GM12878 (cell line): ENCODE measurements at regions of chr17 and their contacts with region 1.

Region 1: GRCh38 chr17:9971991-9972599 is 67.0 kb upstream of the RCVRN start:
- DNase-seq: no peak
- ATAC-seq: no peak
- H3K4me3 ChIP-seq: no peak overlapping the region
- H3K27ac ChIP-seq: no peak overlapping the region
- H3K4me1 ChIP-seq: peaks cover 7% of the 10 kb centered on the region; the same call in 1 of the 2 replicates
- H3K27me3 ChIP-seq: no peaks in the 10 kb centered on the region
- CTCF ChIP-seq: no peak
- EP300 ChIP-seq: no peak
- POLR2A ChIP-seq: no peak
- RAD21 ChIP-seq: no peak

Region 2: GRCh38 chr17:9948928-9949327 is 23.2 kb before region 1 on chr17:
- CTCF ChIA-PET with region 1: no interaction called
- POLR2A ChIA-PET with region 1: no interaction called
- RAD21 ChIA-PET with region 1: no interaction called
- SMC1A ChIA-PET with region 1: no interaction called
- in situ Hi-C with region 1: no loop called
- intact Hi-C with region 1: no loop called
- DNase-seq: no peak
- ATAC-seq: no peak
- H3K4me3 ChIP-seq: no peak overlapping the region
- H3K27ac ChIP-seq: no peak overlapping the region
- H3K4me1 ChIP-seq: no peaks in the 10 kb centered on the region
- H3K27me3 ChIP-seq: no peaks in the 10 kb centered on the region
- CTCF ChIP-seq: no peak
- EP300 ChIP-seq: no peak
- POLR2A ChIP-seq: no peak
- RAD21 ChIP-seq: no peak

Region 3: GRCh38 chr17:10033959-10034358 is 61.9 kb after region 1 on chr17:
- CTCF ChIA-PET with region 1: no interaction called
- POLR2A ChIA-PET with region 1: no interaction called
- RAD21 ChIA-PET with region 1: no interaction called
- SMC1A ChIA-PET with region 1: no interaction called
- in situ Hi-C with region 1: no loop called
- intact Hi-C with region 1: no loop called
- DNase-seq: no peak
- ATAC-seq: no peak
- H3K4me3 ChIP-seq: peak overlapping the region; percentile 11; the same call in 1 of the 2 replicates
- H3K27ac ChIP-seq: peak overlapping the region; percentile 43
- H3K4me1 ChIP-seq: peaks cover 14% of the 10 kb centered on the region
- H3K27me3 ChIP-seq: no peaks in the 10 kb centered on the region
- CTCF ChIP-seq: no peak
- EP300 ChIP-seq: no peak
- POLR2A ChIP-seq: no peak
- RAD21 ChIP-seq: no peak

Region 4: DNA sequence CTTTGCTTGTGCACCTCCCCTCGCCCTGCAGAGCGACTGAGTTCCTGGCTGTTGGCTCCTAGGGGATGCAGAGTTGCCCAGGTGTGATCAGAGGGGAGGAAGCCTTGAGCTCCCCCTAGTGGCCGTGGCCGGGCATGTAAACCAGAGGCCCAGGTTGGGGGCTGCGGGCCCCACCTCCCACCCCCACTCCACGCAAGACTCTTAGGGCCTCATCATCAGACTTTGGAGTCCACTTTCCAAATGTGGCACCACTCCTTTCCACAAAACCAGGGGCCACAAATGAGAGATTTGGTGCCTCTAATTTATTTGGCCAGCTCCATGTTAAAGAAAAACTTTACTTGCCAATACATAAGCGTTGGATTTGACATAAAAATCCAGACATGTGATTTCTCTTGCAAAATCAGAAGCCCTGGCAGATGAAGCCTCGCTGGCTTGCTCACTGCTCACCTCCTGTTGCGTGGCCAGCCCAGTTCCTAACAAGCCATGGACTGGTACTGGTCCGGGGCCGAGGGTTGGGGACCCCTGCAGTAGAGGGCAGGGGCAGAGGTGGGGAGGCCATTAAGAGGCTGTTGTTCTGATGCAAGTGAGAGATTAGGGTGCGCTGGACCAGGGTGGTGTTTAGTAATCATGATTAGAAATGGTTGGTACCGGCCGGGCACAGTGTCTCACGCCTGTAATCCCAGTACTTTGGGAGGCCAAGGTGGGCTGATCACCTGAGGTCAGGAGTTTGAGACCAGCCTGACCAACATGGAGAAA is 255.0 kb after region 1 on chr17:
- CTCF ChIA-PET with region 1: interaction called, 35 read pairs
- POLR2A ChIA-PET with region 1: no interaction called
- RAD21 ChIA-PET with region 1: interaction called, 6 read pairs
- SMC1A ChIA-PET with region 1: interaction called, 16 read pairs
- in situ Hi-C with region 1: loop called (anchors 5 kb)
- intact Hi-C with region 1: no loop called
- DNase-seq: no peak
- ATAC-seq: peak; percentile 97
- H3K4me3 ChIP-seq: no peak overlapping the region
- H3K27ac ChIP-seq: no peak overlapping the region
- H3K4me1 ChIP-seq: no peaks in the 10 kb centered on the region; the same call in 1 of the 2 replicates
- H3K27me3 ChIP-seq: no peaks in the 10 kb centered on the region
- CTCF ChIP-seq: peak; percentile 85 to 98 (median 85)
- EP300 ChIP-seq: no peak
- POLR2A ChIP-seq: no peak
- RAD21 ChIP-seq: peak; percentile 70

Region 5: GRCh38 chr17:10327640-10328039 is 355.5 kb after region 1 on chr17:
- CTCF ChIA-PET with region 1: interaction called, 3 read pairs
- POLR2A ChIA-PET with region 1: no interaction called
- RAD21 ChIA-PET with region 1: no interaction called
- SMC1A ChIA-PET with region 1: no interaction called
- in situ Hi-C with region 1: no loop called
- intact Hi-C with region 1: loop called (anchors 10 kb)
- DNase-seq: peak; percentile 35
- ATAC-seq: peak; percentile 93
- H3K4me3 ChIP-seq: no peak overlapping the region
- H3K27ac ChIP-seq: no peak overlapping the region
- H3K4me1 ChIP-seq: no peaks in the 10 kb centered on the region
- H3K27me3 ChIP-seq: peaks cover 0 to 1% of the 10 kb centered on the region in 2 experiments; a peak in 1 of 4 replicates
- CTCF ChIP-seq: peak; percentile 88 to 96 (median 94)
- EP300 ChIP-seq: no peak
- POLR2A ChIP-seq: no peak
- RAD21 ChIP-seq: peak; percentile 67

Region 6: DNA sequence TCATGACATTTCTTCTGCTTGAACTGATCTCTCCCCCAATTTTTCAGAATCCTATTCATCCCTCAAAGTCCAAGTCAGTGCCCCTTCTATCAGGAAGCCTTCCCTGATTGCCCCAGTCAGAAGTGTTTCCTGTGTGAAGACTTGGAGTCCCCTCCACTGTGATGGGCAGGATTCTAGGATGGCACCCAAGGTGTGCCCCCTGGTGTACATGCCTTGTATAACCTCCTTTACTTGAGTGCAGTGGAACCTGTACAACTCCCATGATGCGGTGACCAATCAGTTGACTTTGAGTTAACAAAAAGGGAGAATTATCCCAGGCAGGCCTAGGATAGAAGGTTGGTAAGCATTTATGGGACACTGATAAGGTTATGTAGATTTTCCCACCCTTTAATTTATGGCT is 377.3 kb after region 1 on chr17:
- CTCF ChIA-PET with region 1: no interaction called
- POLR2A ChIA-PET with region 1: no interaction called
- RAD21 ChIA-PET with region 1: no interaction called
- SMC1A ChIA-PET with region 1: no interaction called
- in situ Hi-C with region 1: no loop called
- intact Hi-C with region 1: loop called (anchors 5 kb)
- DNase-seq: no peak
- ATAC-seq: peak; percentile 65
- H3K4me3 ChIP-seq: no peak overlapping the region
- H3K27ac ChIP-seq: no peak overlapping the region
- H3K4me1 ChIP-seq: no peaks in the 10 kb centered on the region
- H3K27me3 ChIP-seq: no peaks in the 10 kb centered on the region; a peak in 2 of 4 replicates
- CTCF ChIP-seq: peak; percentile 19 to 45 (median 28); a peak in 3 of 6 replicates
- EP300 ChIP-seq: no peak
- POLR2A ChIP-seq: no peak
- RAD21 ChIP-seq: no peak